GM13976 (cell line): ENCODE measurements at regions of chr20 and their contacts with region 1.

Region 1: DNA sequence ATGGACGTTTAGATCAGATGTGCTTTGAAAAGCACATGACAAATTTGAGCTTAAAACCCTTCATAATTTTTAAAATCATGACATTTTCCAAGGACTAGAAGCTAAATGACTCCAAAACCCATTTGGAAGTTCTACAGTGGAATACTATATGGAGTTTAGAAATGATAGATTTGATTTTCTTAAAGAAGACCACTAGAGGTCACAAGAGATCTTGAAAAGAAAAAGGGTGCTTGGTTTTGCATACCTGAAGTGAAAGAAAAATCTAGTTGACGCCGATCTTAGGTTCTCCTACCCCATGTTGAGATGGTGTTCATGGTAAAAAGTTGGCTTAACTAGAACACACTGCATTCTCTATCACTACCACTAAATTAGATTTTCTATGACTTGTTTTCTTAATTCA is 31.5 kb downstream of the CFAP61 start:
- DNase-seq: peak; percentile 41
- CTCF ChIP-seq: peak; percentile 34

Region 2: DNA sequence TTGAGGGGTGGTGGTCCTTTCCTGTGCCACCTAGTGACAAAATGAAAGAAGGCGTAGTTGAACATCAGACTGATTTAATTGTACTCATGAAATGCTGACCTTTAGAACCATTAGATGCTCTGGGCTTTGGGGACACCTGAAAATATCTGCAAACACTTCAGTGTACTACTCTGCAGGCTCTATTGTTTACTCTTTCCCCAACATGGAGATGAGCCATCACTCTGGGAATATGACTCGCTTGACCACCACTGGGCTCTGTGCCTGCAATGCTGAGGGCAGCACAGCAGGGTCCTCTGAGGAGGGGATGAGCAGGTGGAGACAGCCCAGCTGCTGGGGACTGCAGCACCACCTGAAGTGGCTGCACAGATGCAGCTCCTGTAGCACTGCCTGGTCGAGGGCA is 946.2 kb before region 1 on chr20:
- in situ Hi-C with region 1: no loop called
- DNase-seq: no peak
- CTCF ChIP-seq: no peak

Region 3: DNA sequence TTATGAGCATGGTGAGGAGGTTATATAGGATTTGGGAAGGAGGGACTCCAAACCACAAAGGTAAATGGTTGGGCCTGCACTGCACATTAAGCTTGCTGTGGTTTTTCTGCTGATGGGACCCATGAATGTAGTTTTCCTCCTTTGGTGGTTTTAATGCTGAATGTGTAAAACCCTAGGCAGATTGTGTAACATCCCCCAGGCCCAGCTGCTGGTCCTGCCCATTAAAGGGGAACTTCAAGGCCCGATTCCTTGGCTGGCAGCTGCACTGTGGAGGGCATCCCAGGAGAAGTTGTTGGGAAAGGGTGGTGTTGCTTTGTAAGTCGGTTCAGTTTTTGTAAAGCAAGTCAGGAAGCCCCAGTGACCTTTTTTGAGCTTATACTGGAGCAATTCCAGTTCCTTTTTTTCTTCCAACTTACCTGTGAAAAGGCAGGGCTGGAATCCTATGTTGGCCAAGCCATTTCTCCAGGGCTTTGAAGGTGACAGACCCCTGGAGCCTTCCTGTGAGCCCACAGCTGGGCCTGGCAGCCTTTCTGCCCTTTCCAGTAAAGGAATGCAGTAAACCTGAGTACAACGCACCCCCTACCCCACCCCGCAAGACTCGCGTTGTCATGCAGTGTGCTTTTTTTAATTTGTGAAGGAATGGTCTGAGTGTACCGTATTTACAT is 109.7 kb before region 1 on chr20:
- in situ Hi-C with region 1: no loop called
- DNase-seq: no peak
- CTCF ChIP-seq: no peak

Region 4: GRCh38 chr20:20237093-20237959 is 153.5 kb after region 1 on chr20:
- in situ Hi-C with region 1: loop called (anchors 25 kb)
- DNase-seq: peak; percentile 71
- CTCF ChIP-seq: peak; percentile 74

Region 5: DNA sequence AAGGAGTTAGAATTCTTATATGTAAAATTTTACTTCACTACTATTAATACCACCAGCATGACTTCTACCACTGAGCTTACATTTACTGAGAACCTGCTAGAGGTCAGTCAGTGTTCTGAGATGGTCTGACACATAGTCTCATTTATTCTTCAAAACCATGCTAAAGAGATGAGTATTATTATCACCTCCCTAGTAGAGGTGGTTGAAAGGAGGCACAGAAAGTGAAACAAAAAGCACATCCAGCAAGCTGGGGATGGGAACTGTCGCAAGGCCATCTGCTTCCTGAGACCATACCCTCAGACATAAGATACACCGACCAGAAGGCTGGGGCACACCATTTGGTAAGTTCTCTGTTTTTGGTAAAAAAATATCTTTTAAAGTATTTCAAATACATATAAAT is 421.7 kb after region 1 on chr20:
- in situ Hi-C with region 1: no loop called
- DNase-seq: peak; percentile 44
- CTCF ChIP-seq: no peak

Region 6: GRCh38 chr20:20568604-20569205 is 484.9 kb after region 1 on chr20:
- in situ Hi-C with region 1: loop called (anchors 25 kb)
- DNase-seq: peak; percentile 37
- CTCF ChIP-seq: peak; percentile 53

Region 7: DNA sequence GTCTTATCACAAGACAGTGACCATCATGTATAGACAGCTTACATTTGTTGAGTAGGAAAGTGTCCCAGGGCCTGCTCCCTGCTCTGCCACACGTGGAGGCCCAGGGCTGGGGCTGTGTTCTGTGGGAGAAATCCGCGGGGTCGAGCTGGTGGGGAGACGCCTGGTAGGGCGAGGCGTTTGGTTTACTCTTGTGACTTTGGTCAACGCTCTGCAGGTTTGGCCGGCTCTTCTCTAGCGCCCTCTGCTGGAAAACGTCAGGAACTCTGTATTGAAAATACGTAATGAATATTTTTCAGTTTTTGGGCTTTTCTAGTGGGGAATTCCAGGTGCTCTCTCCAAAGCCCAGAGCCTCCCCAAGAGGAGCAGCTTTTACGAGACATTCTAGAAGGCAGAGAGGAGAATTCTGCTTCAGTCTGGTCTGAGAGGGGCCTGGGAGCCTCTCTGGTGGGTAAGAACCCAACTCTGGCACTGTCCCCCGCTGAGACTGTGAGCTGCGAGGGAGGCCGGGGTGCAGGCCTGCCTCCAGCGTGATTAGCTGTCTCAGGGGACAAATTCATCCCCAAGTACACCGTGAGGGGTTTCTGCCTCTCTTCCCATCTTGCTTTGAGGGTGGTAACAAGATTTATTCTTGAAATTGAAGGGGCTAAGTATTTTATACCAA is 741.2 kb after region 1 on chr20:
- in situ Hi-C with region 1: loop called (anchors 25 kb)
- DNase-seq: peak; percentile 83
- CTCF ChIP-seq: peak; percentile 71